CD8-positive, alpha-beta T cell (primary cell): ENCODE measurements at regions of chr4 and their contacts with region 1.

Region 1: GRCh38 chr4:26319467-26319948 is 1.3 kb upstream of the RBPJ start:
- DNase-seq: peak; percentile 91 to 99 (median 96)
- ATAC-seq: peak; percentile 60
- H3K4me3 ChIP-seq: peak overlapping the region; percentile 91 to 100
- H3K4me3 Mint-ChIP-seq: peak overlapping the region; percentile 99
- H3K27ac ChIP-seq: peak overlapping the region; percentile 83 to 89
- H3K27ac Mint-ChIP-seq: peak overlapping the region; percentile 100
- H3K4me1 ChIP-seq: peaks cover 14% of the 10 kb centered on the region
- H3K4me1 Mint-ChIP-seq: peaks cover 37% of the 10 kb centered on the region
- H3K27me3 ChIP-seq: no peaks in the 10 kb centered on the region
- H3K27me3 Mint-ChIP-seq: no peaks in the 10 kb centered on the region
- CTCF ChIP-seq: no peak

Region 2: GRCh38 chr4:24584175-24584850 is 1735.2 kb before region 1 on chr4 and contains the start of gene DHX15:
- CTCF ChIA-PET with region 1: no interaction called
- POLR2A ChIA-PET with region 1: no interaction called
- intact Hi-C with region 1: loop called (anchors 10 kb)
- DNase-seq: peak; percentile 81 to 98 (median 91)
- ATAC-seq: peak; percentile 94
- H3K4me3 ChIP-seq: peak within 1 kb of the TSS; percentile 81 to 97
- H3K4me3 Mint-ChIP-seq: peak within 1 kb of the TSS; percentile 98
- H3K27ac ChIP-seq: peak within 1 kb of the TSS; percentile 90 to 98
- H3K27ac Mint-ChIP-seq: peak within 1 kb of the TSS; percentile 98
- H3K4me1 ChIP-seq: peaks cover 18% of the 10 kb centered on the region
- H3K4me1 Mint-ChIP-seq: peaks cover 43% of the 10 kb centered on the region
- H3K27me3 ChIP-seq: no peaks in the 10 kb centered on the region
- H3K27me3 Mint-ChIP-seq: no peaks in the 10 kb centered on the region
- CTCF ChIP-seq: no peak
- total RNA-seq, gene DHX15: 211 to 221 TPM

Region 3: DNA sequence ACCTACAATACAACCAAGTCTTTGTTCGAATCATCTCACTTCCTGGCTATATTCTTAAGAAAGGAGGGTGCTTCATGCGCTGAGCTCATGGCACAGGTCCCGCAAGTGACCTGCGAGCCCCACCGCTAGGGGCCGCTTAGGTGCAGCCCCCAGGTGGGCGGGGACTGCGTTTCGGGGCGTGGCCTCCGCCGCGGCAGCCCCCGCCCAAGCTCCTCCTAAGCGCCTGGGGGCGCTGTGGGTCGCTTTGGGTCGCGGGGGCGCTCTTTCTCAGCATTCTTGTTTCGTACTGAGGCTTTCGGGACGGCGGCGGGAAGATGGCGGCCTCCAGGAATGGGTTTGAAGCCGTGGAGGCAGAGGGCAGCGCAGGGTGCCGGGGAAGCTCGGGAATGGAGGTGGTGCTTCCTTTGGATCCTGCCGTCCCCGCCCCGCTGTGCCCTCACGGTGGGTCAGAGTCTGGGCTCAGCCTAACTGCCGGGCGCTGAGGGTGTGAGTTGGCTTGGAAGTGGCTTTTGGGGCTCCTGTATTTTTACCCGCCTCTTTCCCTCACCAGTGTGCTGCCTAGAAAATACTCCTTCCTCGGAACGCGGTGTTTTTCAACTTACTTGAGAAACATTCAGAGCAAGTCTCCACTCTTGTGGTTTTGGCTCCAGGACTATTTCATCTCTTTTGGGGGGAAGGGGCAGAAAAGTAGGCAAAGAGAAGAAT is 1006.9 kb before region 1 on chr4 and contains the start of gene ZCCHC4:
- CTCF ChIA-PET with region 1: no interaction called
- POLR2A ChIA-PET with region 1: interaction called, 3 read pairs
- intact Hi-C with region 1: loop called in 1 of 2 experiments (anchors 10 kb)
- DNase-seq: peak; percentile 80 to 97 (median 89)
- ATAC-seq: peak; percentile 99
- H3K4me3 ChIP-seq: peak within 1 kb of the TSS; percentile 83 to 95
- H3K4me3 Mint-ChIP-seq: peak within 1 kb of the TSS; percentile 99
- H3K27ac ChIP-seq: peak within 1 kb of the TSS; percentile 48 to 73
- H3K27ac Mint-ChIP-seq: peak within 1 kb of the TSS; percentile 96
- H3K4me1 ChIP-seq: peaks cover 9% of the 10 kb centered on the region
- H3K4me1 Mint-ChIP-seq: peaks cover 27% of the 10 kb centered on the region
- H3K27me3 ChIP-seq: no peaks in the 10 kb centered on the region
- H3K27me3 Mint-ChIP-seq: peaks cover 8% of the 10 kb centered on the region
- CTCF ChIP-seq: peak; percentile 99
- total RNA-seq, gene ZCCHC4: 6.5 to 9.9 TPM

Region 4: DNA sequence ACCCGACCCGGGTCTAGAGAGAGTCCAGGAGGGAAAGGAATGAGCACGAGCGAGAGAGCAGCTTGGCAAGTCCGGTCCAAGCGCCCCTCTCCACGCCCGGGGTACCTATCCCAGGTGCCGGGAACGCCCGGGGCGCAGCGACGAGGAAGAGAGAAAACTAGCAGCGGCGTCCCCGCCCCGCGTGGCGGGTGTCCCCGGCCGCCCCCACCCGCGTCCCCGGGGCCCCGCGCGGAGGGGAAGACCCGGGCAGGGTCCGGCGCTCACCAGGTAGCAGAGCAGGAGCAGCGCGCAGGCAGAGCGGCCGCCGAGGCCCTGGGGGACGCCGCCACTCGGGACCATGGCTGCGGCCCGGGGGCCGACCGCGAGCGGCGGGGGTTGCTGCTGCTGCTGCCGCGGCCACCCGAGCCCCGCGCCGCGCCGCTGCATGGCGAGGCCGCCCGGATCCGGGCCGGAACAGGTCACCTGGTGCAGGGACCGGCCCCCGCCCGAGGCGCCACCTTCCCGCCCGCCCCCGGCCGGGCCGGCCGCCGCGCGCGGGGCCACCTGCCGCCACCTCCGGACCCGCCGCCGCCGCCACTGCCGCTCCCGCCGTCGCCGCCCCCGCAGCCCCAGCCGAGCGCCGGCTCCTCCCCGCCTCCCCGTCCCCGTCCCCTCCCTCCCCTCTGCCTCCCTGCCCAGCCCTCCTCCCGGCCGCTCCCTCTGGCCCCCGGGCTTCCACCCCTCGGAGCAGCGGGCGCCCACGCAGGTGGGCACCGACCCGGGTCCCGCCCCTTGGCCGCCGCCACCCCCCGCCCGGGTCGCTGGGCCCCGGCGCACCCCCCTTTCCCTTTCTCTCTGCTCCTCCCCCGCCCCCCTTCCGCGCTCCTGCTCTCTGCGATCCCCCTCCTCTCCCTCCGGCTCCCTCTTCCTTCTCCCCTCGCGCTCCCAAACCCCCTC is 456.8 kb before region 1 on chr4 and contains the start of gene SEL1L3:
- CTCF ChIA-PET with region 1: interaction called, 3 read pairs
- POLR2A ChIA-PET with region 1: interaction called, 10 read pairs
- intact Hi-C with region 1: loop called (anchors 2 to 5 kb)
- DNase-seq: peak in 8 of 9 experiments; percentile 34 to 71 (median 51)
- ATAC-seq: peak; percentile 37
- H3K4me3 ChIP-seq: peak within 1 kb of the TSS; percentile 71 to 72
- H3K4me3 Mint-ChIP-seq: peak within 1 kb of the TSS; percentile 100
- H3K27ac ChIP-seq: peak within 1 kb of the TSS; percentile 54 to 80
- H3K27ac Mint-ChIP-seq: peak within 1 kb of the TSS; percentile 91
- H3K4me1 ChIP-seq: peaks cover 40% of the 10 kb centered on the region
- H3K4me1 Mint-ChIP-seq: peaks cover 41% of the 10 kb centered on the region
- H3K27me3 ChIP-seq: no peaks in the 10 kb centered on the region
- H3K27me3 Mint-ChIP-seq: no peaks in the 10 kb centered on the region
- CTCF ChIP-seq: no peak
- total RNA-seq, gene SEL1L3: 31.2 to 33.7 TPM

Region 5: DNA sequence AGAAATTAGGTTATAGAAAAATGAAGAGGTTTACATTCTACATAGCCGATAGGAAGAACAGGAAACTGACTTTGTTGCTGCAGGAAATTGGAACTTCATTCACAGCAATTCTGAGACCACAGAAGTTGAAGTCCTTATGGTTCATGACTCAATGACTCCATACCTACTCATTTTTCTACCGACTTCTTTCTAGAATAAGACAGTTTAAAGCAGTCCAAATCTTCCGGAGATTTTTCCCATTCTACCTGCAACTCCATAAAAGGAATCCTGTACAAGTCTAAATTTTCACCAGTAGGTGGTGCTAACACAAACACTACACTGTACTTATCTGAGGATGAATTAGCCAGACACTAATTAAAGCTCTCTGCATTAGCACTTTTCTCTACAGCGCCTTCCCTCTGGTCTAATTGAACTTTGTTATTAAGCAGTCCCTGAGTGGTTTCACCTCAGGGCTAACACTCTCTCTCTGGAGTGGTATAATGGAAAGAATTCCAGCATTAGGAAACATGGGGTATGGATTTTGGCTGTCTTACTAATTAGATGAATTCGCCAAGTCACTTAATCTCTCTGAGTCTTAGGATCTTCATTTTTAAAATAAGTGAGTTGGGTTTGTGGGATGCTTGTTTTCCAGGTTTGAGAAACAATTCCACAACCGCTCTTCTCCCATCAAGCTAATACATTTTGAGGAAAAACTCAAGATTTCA is 237.6 kb before region 1 on chr4:
- CTCF ChIA-PET with region 1: interaction called, 22 read pairs
- POLR2A ChIA-PET with region 1: no interaction called
- intact Hi-C with region 1: loop called in 1 of 2 experiments (anchors 2 kb)
- DNase-seq: peak in 2 of 9 experiments; percentile 58 to 66
- ATAC-seq: no peak
- H3K4me3 ChIP-seq: no peak overlapping the region
- H3K4me3 Mint-ChIP-seq: no peak overlapping the region
- H3K27ac ChIP-seq: no peak overlapping the region
- H3K27ac Mint-ChIP-seq: no peak overlapping the region
- H3K4me1 ChIP-seq: no peaks in the 10 kb centered on the region
- H3K4me1 Mint-ChIP-seq: peaks cover 4% of the 10 kb centered on the region
- H3K27me3 ChIP-seq: no peaks in the 10 kb centered on the region
- H3K27me3 Mint-ChIP-seq: peaks cover 17% of the 10 kb centered on the region
- CTCF ChIP-seq: peak; percentile 53

Region 6: DNA sequence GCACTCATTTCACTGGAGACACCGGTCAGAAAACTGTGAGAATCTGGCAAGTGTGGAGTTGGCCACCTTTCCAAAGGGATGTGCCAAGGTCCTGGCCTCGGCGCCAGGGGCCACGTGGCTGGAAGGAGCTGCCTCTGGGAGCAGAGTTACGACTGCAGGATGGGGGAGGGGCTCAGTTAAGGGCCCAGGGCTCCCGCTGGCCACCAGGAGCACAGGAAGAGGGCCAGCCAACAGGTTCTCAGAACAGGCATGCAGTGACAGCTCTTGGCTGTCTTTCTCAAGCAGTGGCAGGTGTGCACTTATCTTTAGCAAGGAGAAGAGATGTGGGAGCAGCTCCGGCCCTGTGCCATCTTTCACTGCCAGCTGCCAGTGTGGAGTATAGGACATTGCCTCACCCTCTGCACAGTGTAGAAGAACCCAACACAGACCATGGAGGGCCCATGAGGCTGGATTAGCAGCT is 114.6 kb before region 1 on chr4:
- CTCF ChIA-PET with region 1: no interaction called
- POLR2A ChIA-PET with region 1: interaction called, 3 read pairs
- intact Hi-C with region 1: loop called in 1 of 2 experiments (anchors 5 kb)
- DNase-seq: no peak
- ATAC-seq: no peak
- H3K4me3 ChIP-seq: no peak overlapping the region
- H3K4me3 Mint-ChIP-seq: no peak overlapping the region
- H3K27ac ChIP-seq: no peak overlapping the region
- H3K27ac Mint-ChIP-seq: no peak overlapping the region
- H3K4me1 ChIP-seq: peaks cover 19% of the 10 kb centered on the region
- H3K4me1 Mint-ChIP-seq: peaks cover 26% of the 10 kb centered on the region
- H3K27me3 ChIP-seq: peaks cover 0 to 6% of the 10 kb centered on the region in 2 experiments
- H3K27me3 Mint-ChIP-seq: peaks cover 3% of the 10 kb centered on the region
- CTCF ChIP-seq: no peak

Region 7: GRCh38 chr4:26342328-26343037 is 23.0 kb after region 1 on chr4:
- CTCF ChIA-PET with region 1: no interaction called
- POLR2A ChIA-PET with region 1: no interaction called
- intact Hi-C with region 1: no loop called
- DNase-seq: no peak
- ATAC-seq: no peak
- H3K4me3 ChIP-seq: no peak overlapping the region
- H3K4me3 Mint-ChIP-seq: no peak overlapping the region
- H3K27ac ChIP-seq: no peak overlapping the region
- H3K27ac Mint-ChIP-seq: no peak overlapping the region
- H3K4me1 ChIP-seq: peaks cover 5% of the 10 kb centered on the region
- H3K4me1 Mint-ChIP-seq: peaks cover 56% of the 10 kb centered on the region
- H3K27me3 ChIP-seq: no peaks in the 10 kb centered on the region
- H3K27me3 Mint-ChIP-seq: no peaks in the 10 kb centered on the region
- CTCF ChIP-seq: no peak

Region 8: DNA sequence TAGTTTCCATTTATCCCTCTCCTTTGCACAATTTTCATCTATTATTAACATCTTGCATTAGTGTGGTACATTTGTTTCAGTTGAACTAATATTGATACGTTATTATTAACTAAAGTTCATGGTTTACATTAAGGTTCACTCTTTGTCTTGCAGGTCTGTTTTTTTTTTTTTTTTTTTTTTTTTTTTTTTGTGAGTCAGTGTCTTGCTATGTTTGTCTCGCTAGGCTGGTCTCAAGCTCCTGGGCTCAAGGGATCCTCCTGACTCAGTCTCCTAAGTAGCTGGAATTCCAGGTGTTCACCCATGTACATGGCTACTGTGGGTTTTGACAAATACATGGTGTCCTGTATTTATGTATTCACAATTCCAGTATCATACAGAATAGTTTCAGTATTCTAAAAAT is 271.1 kb after region 1 on chr4:
- CTCF ChIA-PET with region 1: no interaction called
- POLR2A ChIA-PET with region 1: no interaction called
- intact Hi-C with region 1: no loop called
- DNase-seq: no peak
- ATAC-seq: no peak
- H3K4me3 ChIP-seq: no peak overlapping the region
- H3K4me3 Mint-ChIP-seq: no peak overlapping the region
- H3K27ac ChIP-seq: no peak overlapping the region
- H3K27ac Mint-ChIP-seq: no peak overlapping the region
- H3K4me1 ChIP-seq: no peaks in the 10 kb centered on the region
- H3K4me1 Mint-ChIP-seq: peaks cover 10% of the 10 kb centered on the region
- H3K27me3 ChIP-seq: no peaks in the 10 kb centered on the region
- H3K27me3 Mint-ChIP-seq: no peaks in the 10 kb centered on the region
- CTCF ChIP-seq: no peak